Spleen (tissue), 13 donors: ENCODE measurements at regions of chr2 and their contacts with region 1.

Region 1: GRCh38 chr2:43105586-43106558 is 120.5 kb downstream of the ZFP36L2 start:
- DNase-seq: peak; percentile 85
- H3K4me3 ChIP-seq: peak overlapping the region in 1 of 8 donors; percentile 28
- H3K27ac ChIP-seq: peak overlapping the region; percentile 71 to 92 (median 83)
- H3K4me1 ChIP-seq: peaks cover 44 to 88% (median 69%) of the 10 kb centered on the region in 6 donors
- H3K27me3 ChIP-seq: no peaks in the 10 kb centered on the region
- CTCF ChIP-seq: peak in 9 of 11 experiments; percentile 47 to 82 (median 69)
- POLR2A ChIP-seq: no peak

Region 2: GRCh38 chr2:42987112-42987922 is 118.6 kb before region 1 on chr2:
- intact Hi-C with region 1: loop called (anchors 10 kb)
- DNase-seq: peak; percentile 8
- H3K4me3 ChIP-seq: no peak overlapping the region
- H3K27ac ChIP-seq: no peak overlapping the region
- H3K4me1 ChIP-seq: no peaks in the 10 kb centered on the region
- H3K27me3 ChIP-seq: no peaks in the 10 kb centered on the region
- CTCF ChIP-seq: no peak
- POLR2A ChIP-seq: no peak

Region 3: DNA sequence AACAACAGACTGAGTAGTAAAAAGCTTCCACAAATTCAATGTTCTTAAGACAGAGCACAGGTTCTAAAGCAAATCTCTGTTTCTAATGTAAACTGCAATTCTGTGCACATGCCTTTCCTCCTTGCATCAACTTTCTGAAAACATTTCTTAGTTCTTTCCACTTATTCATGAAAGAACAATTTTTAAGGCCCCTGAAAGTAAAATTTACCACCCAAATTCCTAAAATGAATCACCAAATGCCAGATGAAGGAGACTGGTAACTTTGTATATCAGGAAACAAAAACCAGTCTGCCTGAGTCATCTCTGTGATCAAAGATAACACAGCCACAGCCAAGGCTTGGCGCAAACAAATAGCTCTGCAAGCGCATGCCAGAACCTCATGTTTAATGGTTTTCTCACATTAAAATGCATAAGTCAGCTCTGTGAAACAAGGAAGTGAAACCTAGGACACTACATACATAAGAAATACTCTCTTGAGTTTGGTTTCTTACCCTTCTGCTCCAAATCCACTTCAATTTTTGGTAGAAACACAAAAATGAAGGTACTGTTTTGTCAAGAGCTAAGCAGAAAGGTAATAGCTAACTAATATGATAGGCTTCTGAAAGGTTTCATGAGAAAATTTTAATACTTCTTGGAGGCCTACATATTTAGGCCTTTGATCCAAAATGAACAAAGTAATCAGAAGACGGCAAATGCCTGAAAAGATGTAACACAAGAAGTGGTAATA is 320.6 kb after region 1 on chr2:
- intact Hi-C with region 1: no loop called
- DNase-seq: peak; percentile 81
- H3K4me3 ChIP-seq: no peak overlapping the region
- H3K27ac ChIP-seq: peak overlapping the region; percentile 22 to 83 (median 75)
- H3K4me1 ChIP-seq: peaks cover 6 to 41% (median 33%) of the 10 kb centered on the region in 6 donors
- H3K27me3 ChIP-seq: no peaks in the 10 kb centered on the region
- CTCF ChIP-seq: no peak
- POLR2A ChIP-seq: no peak